ENCODE measurements at regions of chr1 and their contacts with region 1.

Region 1: DNA sequence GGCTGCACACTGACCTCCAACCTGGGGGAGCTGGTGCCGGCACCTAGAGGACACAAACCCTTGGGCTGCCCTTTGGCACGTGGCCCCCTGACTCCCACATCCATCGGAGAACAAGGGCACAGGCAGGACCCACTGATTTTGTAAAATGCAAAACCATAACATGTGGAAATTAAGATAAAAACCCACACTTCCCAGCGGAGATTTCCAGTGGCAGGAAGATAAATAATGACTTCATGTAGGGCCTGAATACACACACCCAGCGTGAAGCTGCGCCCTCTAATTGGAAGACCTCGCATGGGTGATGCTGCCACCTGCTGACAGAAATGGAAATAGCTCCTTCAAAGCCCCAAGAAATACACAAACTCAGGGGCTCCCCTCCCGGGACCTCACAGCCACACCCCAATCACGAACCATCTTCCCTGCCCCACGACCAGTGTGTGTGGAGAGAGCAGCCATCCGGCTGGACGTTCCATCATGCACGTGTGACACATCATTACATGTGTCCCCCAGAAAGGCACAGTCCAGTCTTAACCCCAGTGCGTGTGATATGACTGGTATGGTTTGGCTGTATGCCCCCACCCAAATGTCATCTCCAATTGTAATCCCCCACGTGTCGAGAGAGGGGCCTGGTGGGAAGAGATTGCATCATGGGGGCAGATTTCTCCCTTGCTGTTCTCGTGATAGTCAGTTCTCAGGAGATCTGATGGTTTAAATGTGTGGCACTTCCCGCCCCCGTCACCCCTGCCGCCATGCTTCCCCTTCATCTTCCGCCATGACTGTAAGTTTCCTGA is 5.7 kb upstream of the TPRG1L start:
- DNase-seq: peak; percentile 14
- H3K4me3 ChIP-seq: no peak overlapping the region
- CTCF ChIP-seq: peak; percentile 77

Region 2: DNA sequence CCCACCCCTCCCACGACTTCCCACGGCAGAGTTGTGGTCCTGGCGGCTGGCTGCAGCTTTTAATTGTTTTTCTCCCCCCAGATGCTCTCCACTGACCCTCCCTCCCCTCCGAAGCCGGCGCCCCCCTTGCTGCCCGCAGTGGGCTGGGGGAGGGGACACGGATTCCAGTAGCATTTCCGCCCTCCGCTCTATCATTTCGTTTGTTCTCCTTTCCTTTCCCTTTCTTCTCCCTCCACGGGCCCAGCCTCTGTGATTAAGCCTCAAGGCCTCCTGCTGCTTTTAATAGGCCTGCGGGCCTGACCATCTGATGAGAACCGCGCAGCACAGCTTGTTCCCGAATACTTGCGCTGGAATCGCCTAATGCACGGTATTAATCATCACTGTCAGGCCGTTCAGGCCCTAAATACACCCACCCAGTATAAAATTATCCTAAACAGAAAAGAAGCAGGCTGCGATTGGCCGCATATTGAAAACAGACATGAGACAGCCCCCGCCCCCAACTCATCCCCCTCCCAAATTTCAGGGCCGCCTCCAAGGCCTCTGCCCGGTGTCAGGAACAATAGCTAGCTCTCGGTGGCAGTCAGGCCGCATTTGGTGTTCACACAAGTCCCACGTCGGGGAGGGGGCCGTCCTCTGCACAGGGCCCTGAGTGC is 266.7 kb before region 1 on chr1:
- CTCF ChIA-PET with region 1: no interaction called
- POLR2A ChIA-PET with region 1: no interaction called
- DNase-seq: peak; percentile 23
- H3K4me3 ChIP-seq: no peak overlapping the region
- CTCF ChIP-seq: no peak

Region 3: DNA sequence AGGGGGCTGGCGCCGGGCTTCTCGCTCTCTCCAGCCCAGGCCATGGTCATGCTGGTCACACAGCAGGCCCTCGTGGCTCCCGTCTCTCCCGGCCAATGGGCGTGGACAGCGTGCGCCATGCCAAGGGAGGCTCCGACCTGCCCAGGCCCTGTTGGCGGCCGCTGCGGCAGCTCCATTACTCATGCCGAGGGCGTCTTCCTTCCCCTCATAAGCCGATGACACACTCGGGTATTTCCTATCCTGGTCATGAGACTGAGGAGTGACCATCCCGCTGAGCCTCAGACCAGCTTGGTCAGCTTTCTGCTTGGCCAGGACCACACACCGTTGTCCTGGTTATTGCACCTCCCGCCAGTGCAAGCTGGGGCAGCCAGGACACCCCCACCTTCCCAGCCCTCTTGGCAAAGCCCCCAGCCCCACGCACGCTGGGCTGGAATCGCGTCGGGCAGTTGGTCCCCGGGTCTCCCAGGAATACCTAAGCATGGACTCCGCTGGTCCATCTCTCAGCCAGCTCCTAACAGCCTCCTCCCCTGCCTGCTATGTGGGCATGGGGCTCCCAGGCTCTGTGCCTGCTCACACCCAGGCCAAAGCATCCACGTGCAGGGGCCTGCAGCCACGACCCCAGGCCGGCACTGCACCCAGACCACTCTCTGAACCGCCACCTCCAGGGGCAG is 114.8 kb before region 1 on chr1:
- CTCF ChIA-PET with region 1: interaction called, 10 read pairs
- POLR2A ChIA-PET with region 1: no interaction called
- DNase-seq: peak; percentile 36
- H3K4me3 ChIP-seq: no peak overlapping the region
- CTCF ChIP-seq: no peak

Region 4: GRCh38 chr1:3530926-3531818 is 87.9 kb before region 1 on chr1:
- CTCF ChIA-PET with region 1: interaction called, 17 read pairs
- POLR2A ChIA-PET with region 1: no interaction called
- DNase-seq: no peak
- H3K4me3 ChIP-seq: peak overlapping the region; percentile 57
- CTCF ChIP-seq: no peak

Region 5: GRCh38 chr1:3577300-3577699 is 41.8 kb before region 1 on chr1:
- CTCF ChIA-PET with region 1: interaction called, 14 read pairs
- POLR2A ChIA-PET with region 1: no interaction called
- DNase-seq: no peak
- H3K4me3 ChIP-seq: no peak overlapping the region
- CTCF ChIP-seq: no peak

Region 6: GRCh38 chr1:3631330-3632262 is 12.5 kb after region 1 on chr1:
- CTCF ChIA-PET with region 1: interaction called, 43 read pairs
- POLR2A ChIA-PET with region 1: no interaction called
- DNase-seq: no peak
- H3K4me3 ChIP-seq: no peak overlapping the region
- CTCF ChIP-seq: no peak

Region 7: DNA sequence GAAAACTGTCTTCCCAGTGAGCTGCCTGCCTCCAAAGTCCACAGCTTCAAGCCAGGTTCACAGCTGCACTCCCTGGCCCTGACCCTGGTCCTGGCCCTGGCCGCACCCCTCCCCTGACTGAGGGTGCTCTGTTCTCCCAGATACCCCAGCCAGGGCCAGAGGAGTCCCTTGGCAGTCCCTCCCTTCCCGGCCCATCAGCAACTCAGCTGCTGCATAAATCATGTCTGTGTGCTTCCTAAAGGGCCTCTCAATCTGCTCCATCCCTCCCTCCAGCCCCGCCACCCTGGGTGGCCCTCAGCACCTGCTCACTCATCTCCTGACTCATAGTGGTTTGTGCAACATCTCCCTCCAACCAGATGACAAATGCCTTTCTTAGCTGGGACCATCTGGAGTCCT is 305.7 kb after region 1 on chr1:
- CTCF ChIA-PET with region 1: no interaction called
- POLR2A ChIA-PET with region 1: no interaction called
- DNase-seq: no peak
- H3K4me3 ChIP-seq: no peak overlapping the region
- CTCF ChIP-seq: no peak

Region 8: GRCh38 chr1:3968851-3969250 is 349.8 kb after region 1 on chr1:
- CTCF ChIA-PET with region 1: no interaction called
- POLR2A ChIA-PET with region 1: no interaction called
- DNase-seq: no peak
- H3K4me3 ChIP-seq: no peak overlapping the region
- CTCF ChIP-seq: no peak